ENCODE measurements at regions of chr2 and their contacts with region 1.

Region 1: DNA sequence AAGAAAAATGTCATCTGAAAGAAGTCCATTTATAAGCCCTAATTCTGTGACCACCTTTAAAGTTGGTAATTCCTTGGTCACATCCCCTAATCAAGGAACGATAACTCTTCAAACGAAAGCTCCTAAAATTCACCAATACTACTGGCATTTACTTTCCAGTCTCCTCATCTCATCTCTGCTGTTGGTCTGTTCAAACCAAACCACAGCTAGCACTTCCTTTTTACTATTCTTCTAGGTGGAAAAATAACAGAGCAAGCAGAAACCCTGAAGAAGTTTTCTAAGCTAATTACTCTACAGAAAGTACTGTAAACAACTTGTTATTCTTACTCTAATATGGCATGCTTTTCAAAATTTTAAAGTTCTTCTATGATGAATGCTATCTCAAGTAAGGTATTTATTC is 21.6 kb downstream of the TIA1 start:
- DNase-seq: no peak
- ATAC-seq: no peak
- H3K4me3 Mint-ChIP-seq: no peak overlapping the region
- H3K27ac Mint-ChIP-seq: no peak overlapping the region
- H3K4me1 Mint-ChIP-seq: no peaks in the 10 kb centered on the region
- H3K27me3 Mint-ChIP-seq: no peaks in the 10 kb centered on the region
- CTCF ChIP-seq: no peak

Region 2: DNA sequence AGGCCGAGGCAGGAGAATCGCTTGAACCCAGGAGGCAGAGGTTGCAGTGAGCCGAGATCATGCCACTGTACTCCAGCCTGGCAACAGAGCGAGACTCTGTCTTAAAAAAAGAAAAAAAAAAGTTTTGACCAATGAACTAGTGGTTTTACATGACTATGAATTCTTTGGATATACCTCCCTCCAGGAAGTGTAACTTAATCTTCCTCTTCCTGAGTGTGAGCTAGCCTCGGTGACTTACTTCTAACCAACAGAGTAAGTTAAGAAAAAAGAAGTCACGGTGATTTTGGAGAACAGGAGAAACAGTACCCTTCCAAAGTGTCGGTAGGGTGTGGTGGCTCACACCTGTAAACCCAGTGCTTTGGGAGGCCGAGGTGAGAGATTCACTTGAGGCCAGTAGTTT is 14.6 kb after region 1 on chr2:
- CTCF ChIA-PET with region 1: no interaction called
- POLR2A ChIA-PET with region 1: interaction called, 13 read pairs
- intact Hi-C with region 1: loop called (anchors 2 kb)
- DNase-seq: no peak
- ATAC-seq: no peak
- H3K4me3 Mint-ChIP-seq: no peak overlapping the region
- H3K27ac Mint-ChIP-seq: no peak overlapping the region
- H3K4me1 Mint-ChIP-seq: peaks cover 39% of the 10 kb centered on the region
- H3K27me3 Mint-ChIP-seq: no peaks in the 10 kb centered on the region
- CTCF ChIP-seq: no peak